CD4-positive, alpha-beta T cell (primary cell): ENCODE measurements at regions of chr2 and their contacts with region 1.

Region 1: GRCh38 chr2:206800506-206801417 is 35.4 kb downstream of the FASTKD2 start:
- DNase-seq: peak; percentile 13 to 75 (median 32)
- ATAC-seq: peak; percentile 66
- H3K4me3 ChIP-seq: peak overlapping the region; percentile 11
- H3K4me3 Mint-ChIP-seq: peak overlapping the region; percentile 66
- H3K27ac ChIP-seq: no peak overlapping the region
- H3K27ac Mint-ChIP-seq: peak overlapping the region; percentile 32
- H3K4me1 ChIP-seq: peaks cover 6% of the 10 kb centered on the region
- H3K4me1 Mint-ChIP-seq: peaks cover 18% of the 10 kb centered on the region
- H3K27me3 ChIP-seq: no peaks in the 10 kb centered on the region
- H3K27me3 Mint-ChIP-seq: no peaks in the 10 kb centered on the region
- CTCF ChIP-seq: peak; percentile 67

Region 2: GRCh38 chr2:206989306-206989705 is 188.5 kb after region 1 on chr2:
- CTCF ChIA-PET with region 1: no interaction called
- POLR2A ChIA-PET with region 1: no interaction called
- intact Hi-C with region 1: loop called in 1 of 2 experiments (anchors 5 kb)
- DNase-seq: peak in 4 of 14 experiments; percentile 10 to 26 (median 16)
- ATAC-seq: no peak
- H3K4me3 ChIP-seq: no peak overlapping the region
- H3K4me3 Mint-ChIP-seq: no peak overlapping the region
- H3K27ac ChIP-seq: no peak overlapping the region
- H3K27ac Mint-ChIP-seq: peak overlapping the region; percentile 1
- H3K4me1 ChIP-seq: peaks cover 11% of the 10 kb centered on the region
- H3K4me1 Mint-ChIP-seq: peaks cover 29% of the 10 kb centered on the region
- H3K27me3 ChIP-seq: no peaks in the 10 kb centered on the region
- H3K27me3 Mint-ChIP-seq: no peaks in the 10 kb centered on the region
- CTCF ChIP-seq: peak; percentile 27

Region 3: GRCh38 chr2:207041279-207041678 is 240.5 kb after region 1 on chr2:
- CTCF ChIA-PET with region 1: no interaction called
- POLR2A ChIA-PET with region 1: no interaction called
- intact Hi-C with region 1: loop called in 1 of 2 experiments (anchors 5 kb)
- DNase-seq: no peak
- ATAC-seq: no peak
- H3K4me3 ChIP-seq: no peak overlapping the region
- H3K4me3 Mint-ChIP-seq: no peak overlapping the region
- H3K27ac ChIP-seq: no peak overlapping the region
- H3K27ac Mint-ChIP-seq: no peak overlapping the region
- H3K4me1 ChIP-seq: no peaks in the 10 kb centered on the region
- H3K4me1 Mint-ChIP-seq: no peaks in the 10 kb centered on the region
- H3K27me3 ChIP-seq: no peaks in the 10 kb centered on the region
- H3K27me3 Mint-ChIP-seq: peaks cover 4% of the 10 kb centered on the region
- CTCF ChIP-seq: no peak

Region 4: DNA sequence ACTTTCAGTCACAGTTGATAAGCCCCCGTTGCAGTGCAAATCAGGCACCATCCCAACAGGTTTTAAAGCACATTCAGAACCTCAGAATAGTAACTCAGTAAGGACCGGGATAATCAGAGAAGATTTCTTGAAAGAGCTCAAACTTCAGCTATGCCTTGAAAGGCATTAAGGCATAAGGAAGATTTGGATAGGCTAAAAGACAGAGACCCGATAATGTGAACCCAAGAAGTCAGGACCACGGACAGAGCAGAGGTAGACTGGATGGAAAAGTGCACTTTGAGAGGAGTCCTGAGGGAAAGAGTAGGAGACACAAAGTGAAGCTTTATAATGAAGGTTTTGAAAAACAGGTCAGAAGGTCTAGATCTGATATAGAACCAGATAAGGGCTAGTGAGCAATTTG is 401.9 kb after region 1 on chr2:
- CTCF ChIA-PET with region 1: no interaction called
- POLR2A ChIA-PET with region 1: no interaction called
- intact Hi-C with region 1: no loop called
- DNase-seq: peak in 1 of 14 experiments; percentile 8
- ATAC-seq: no peak
- H3K4me3 ChIP-seq: no peak overlapping the region
- H3K4me3 Mint-ChIP-seq: no peak overlapping the region
- H3K27ac ChIP-seq: no peak overlapping the region
- H3K27ac Mint-ChIP-seq: no peak overlapping the region
- H3K4me1 ChIP-seq: no peaks in the 10 kb centered on the region
- H3K4me1 Mint-ChIP-seq: no peaks in the 10 kb centered on the region
- H3K27me3 ChIP-seq: no peaks in the 10 kb centered on the region
- H3K27me3 Mint-ChIP-seq: no peaks in the 10 kb centered on the region
- CTCF ChIP-seq: no peak